SK-N-SH (cell line): ENCODE measurements at regions of chr6 and their contacts with region 1.

Region 1: DNA sequence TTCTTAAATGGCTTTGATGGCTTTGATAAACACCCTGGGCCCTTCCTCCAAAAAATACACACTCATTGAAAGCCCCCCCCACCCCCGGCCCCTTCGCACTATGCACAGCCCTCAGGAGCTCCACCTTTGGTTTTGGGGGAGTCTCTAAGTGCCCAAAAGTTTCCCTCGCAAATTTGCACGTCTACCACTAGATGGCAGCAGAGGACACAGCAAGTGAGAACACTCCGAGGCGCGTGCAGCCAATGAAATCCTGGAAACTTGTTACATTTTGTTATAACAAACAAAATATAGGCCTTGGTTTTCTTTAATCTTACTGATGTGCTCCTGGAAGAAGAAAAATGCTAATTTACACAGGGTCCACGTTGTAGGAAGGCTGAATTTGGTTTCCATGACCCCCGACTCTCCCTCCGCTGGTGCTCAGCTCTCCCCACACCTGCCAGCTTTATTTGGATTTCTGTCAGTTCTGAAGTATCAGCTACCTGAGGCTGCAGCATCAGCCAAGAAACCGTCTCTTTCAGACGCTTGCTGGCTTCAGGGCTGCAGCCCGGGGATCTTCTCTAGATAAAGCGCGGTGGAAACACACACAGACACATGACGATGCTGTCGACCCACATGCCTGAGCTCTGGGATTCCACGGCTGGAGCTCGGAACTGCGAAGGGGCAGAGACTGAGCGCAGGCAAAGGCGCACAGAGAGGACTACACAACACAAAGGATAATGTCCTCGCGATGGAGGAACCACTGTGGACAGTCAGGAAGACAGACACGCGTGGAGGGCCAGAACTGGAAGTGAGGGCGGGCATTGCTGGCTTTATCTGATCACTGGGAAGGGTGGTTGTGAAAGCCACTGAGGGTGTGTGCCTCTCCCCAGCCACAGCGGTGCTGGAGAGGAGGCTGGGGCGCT is 148.4 kb upstream of the RPS6KA2 start:
- DNase-seq: peak; percentile 75
- H3K4me3 ChIP-seq: no peak overlapping the region
- H3K27ac ChIP-seq: no peak overlapping the region
- H3K4me1 ChIP-seq: peaks cover 0 to 3% of the 10 kb centered on the region in 2 experiments; a peak in 1 of 4 replicates
- H3K27me3 ChIP-seq: no peaks in the 10 kb centered on the region
- CTCF ChIP-seq: peak; percentile 89
- EP300 ChIP-seq: no peak
- RAD21 ChIP-seq: peak; percentile 90

Region 2: GRCh38 chr6:166156942-166157341 is 618.5 kb before region 1 on chr6:
- CTCF ChIA-PET with region 1: no interaction called
- POLR2A ChIA-PET with region 1: no interaction called
- DNase-seq: no peak
- H3K4me3 ChIP-seq: no peak overlapping the region
- H3K27ac ChIP-seq: no peak overlapping the region
- H3K4me1 ChIP-seq: no peaks in the 10 kb centered on the region
- H3K27me3 ChIP-seq: no peaks in the 10 kb centered on the region; the same call in 1 of the 2 replicates
- CTCF ChIP-seq: peak; percentile 38
- EP300 ChIP-seq: no peak
- RAD21 ChIP-seq: peak; percentile 65

Region 3: GRCh38 chr6:166786704-166787293 is 11.4 kb after region 1 on chr6:
- CTCF ChIA-PET with region 1: interaction called, 24 read pairs
- POLR2A ChIA-PET with region 1: no interaction called
- DNase-seq: peak; percentile 78
- H3K4me3 ChIP-seq: peak overlapping the region in 1 of 2 experiments; percentile 24; a peak in 1 of 4 replicates
- H3K27ac ChIP-seq: no peak overlapping the region
- H3K4me1 ChIP-seq: no peaks in the 10 kb centered on the region
- H3K27me3 ChIP-seq: no peaks in the 10 kb centered on the region
- CTCF ChIP-seq: peak; percentile 82
- EP300 ChIP-seq: no peak
- RAD21 ChIP-seq: peak; percentile 89

Region 4: GRCh38 chr6:166862287-166862977 is 87.0 kb after region 1 on chr6:
- CTCF ChIA-PET with region 1: interaction called, 10 read pairs
- POLR2A ChIA-PET with region 1: no interaction called
- DNase-seq: peak; percentile 93
- H3K4me3 ChIP-seq: peak overlapping the region; percentile 60 to 67
- H3K27ac ChIP-seq: peak overlapping the region in 1 of 2 experiments; percentile 82; a peak in 2 of 4 replicates
- H3K4me1 ChIP-seq: peaks cover 0 to 12% of the 10 kb centered on the region in 2 experiments; a peak in 2 of 4 replicates
- H3K27me3 ChIP-seq: peaks cover 47% of the 10 kb centered on the region; the same call in 1 of the 2 replicates
- CTCF ChIP-seq: peak; percentile 14
- EP300 ChIP-seq: no peak
- RAD21 ChIP-seq: peak; percentile 27

Region 5: GRCh38 chr6:166956444-166957086 is 181.1 kb after region 1 on chr6 and contains the start of gene RNASET2:
- CTCF ChIA-PET with region 1: interaction called, 24 read pairs
- POLR2A ChIA-PET with region 1: no interaction called
- DNase-seq: peak; percentile 98
- H3K4me3 ChIP-seq: peak within 1 kb of the TSS; percentile 82 to 89
- H3K27ac ChIP-seq: peak within 1 kb of the TSS; percentile 47 to 60; a peak in 3 of 4 replicates
- H3K4me1 ChIP-seq: peaks cover 0 to 14% of the 10 kb centered on the region in 2 experiments; a peak in 1 of 4 replicates
- H3K27me3 ChIP-seq: no peaks in the 10 kb centered on the region
- CTCF ChIP-seq: no peak
- EP300 ChIP-seq: no peak
- RAD21 ChIP-seq: no peak
- polyA plus RNA-seq, gene RNASET2: 58.4 and 59.2 TPM in 2 replicates

Region 6: DNA sequence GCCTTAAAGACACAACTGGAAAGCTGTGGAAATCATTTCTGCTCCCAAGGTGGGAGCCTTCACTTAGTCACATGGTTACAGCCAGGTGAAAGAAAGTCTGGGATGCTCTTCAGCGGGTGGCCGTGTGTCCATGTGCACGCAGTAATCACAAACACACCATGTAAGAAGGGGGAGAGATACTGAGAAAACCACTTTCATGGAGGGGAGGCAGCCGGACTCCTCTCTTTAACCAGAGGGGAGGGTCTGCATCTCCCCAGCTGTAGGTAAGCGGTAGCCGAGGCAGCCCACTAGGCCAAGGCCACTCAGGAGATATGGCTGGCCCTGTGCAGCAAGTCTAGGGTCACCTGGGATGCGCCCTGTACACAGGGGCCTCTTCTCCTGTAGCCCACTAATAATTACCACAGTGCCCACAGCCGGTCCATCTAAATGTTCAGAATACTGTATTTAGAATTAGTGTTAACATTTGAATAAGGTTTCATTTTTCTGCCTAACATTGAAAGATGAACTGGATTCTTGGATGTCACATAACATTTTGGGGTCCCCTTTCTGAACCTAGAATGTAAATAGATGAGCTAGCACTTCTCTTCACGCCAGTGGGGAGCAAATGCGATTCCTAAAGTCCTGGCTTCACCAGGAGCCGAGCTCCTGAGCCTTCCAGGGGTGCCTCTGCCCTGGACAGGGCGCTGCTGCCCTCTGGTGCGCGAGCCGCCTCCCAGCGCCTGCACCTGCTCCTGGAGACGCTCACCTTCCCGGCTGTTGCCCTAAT is 366.4 kb after region 1 on chr6:
- CTCF ChIA-PET with region 1: interaction called, 79 read pairs
- POLR2A ChIA-PET with region 1: no interaction called
- DNase-seq: peak; percentile 90
- H3K4me3 ChIP-seq: no peak overlapping the region; a peak in 1 of 4 replicates
- H3K27ac ChIP-seq: no peak overlapping the region
- H3K4me1 ChIP-seq: peaks cover 0 to 3% of the 10 kb centered on the region in 2 experiments; a peak in 1 of 4 replicates
- H3K27me3 ChIP-seq: 0 out of 2 replicates have a peak, but pooled peaks cover 5% of the 10 kb centered on the region
- CTCF ChIP-seq: peak; percentile 58
- EP300 ChIP-seq: no peak
- RAD21 ChIP-seq: peak; percentile 97

Region 7: GRCh38 chr6:167157414-167157813 is 382.0 kb after region 1 on chr6:
- CTCF ChIA-PET with region 1: interaction called, 15 read pairs
- POLR2A ChIA-PET with region 1: no interaction called
- DNase-seq: no peak
- H3K4me3 ChIP-seq: no peak overlapping the region
- H3K27ac ChIP-seq: no peak overlapping the region
- H3K4me1 ChIP-seq: peaks cover 0 to 7% of the 10 kb centered on the region in 2 experiments; a peak in 2 of 4 replicates
- H3K27me3 ChIP-seq: no peaks in the 10 kb centered on the region
- CTCF ChIP-seq: no peak
- EP300 ChIP-seq: no peak
- RAD21 ChIP-seq: no peak